ENCODE measurements at regions of chr17 and their contacts with region 1.

Region 1: GRCh38 chr17:78697554-78698343 is 84.3 kb downstream of the CYTH1 start:
- DNase-seq: peak; percentile 61
- H3K4me3 ChIP-seq: no peak overlapping the region
- H3K27ac ChIP-seq: peak overlapping the region; percentile 22
- H3K4me1 ChIP-seq: peaks cover 3% of the 10 kb centered on the region
- H3K27me3 ChIP-seq: no peaks in the 10 kb centered on the region
- CTCF ChIP-seq: no peak

Region 2: GRCh38 chr17:78672880-78673371 is 24.8 kb before region 1 on chr17:
- CTCF ChIA-PET with region 1: no interaction called
- POLR2A ChIA-PET with region 1: interaction called, 13 read pairs
- intact Hi-C with region 1: no loop called
- DNase-seq: no peak
- H3K4me3 ChIP-seq: no peak overlapping the region
- H3K27ac ChIP-seq: no peak overlapping the region
- H3K4me1 ChIP-seq: no peaks in the 10 kb centered on the region
- H3K27me3 ChIP-seq: no peaks in the 10 kb centered on the region
- CTCF ChIP-seq: no peak

Region 3: DNA sequence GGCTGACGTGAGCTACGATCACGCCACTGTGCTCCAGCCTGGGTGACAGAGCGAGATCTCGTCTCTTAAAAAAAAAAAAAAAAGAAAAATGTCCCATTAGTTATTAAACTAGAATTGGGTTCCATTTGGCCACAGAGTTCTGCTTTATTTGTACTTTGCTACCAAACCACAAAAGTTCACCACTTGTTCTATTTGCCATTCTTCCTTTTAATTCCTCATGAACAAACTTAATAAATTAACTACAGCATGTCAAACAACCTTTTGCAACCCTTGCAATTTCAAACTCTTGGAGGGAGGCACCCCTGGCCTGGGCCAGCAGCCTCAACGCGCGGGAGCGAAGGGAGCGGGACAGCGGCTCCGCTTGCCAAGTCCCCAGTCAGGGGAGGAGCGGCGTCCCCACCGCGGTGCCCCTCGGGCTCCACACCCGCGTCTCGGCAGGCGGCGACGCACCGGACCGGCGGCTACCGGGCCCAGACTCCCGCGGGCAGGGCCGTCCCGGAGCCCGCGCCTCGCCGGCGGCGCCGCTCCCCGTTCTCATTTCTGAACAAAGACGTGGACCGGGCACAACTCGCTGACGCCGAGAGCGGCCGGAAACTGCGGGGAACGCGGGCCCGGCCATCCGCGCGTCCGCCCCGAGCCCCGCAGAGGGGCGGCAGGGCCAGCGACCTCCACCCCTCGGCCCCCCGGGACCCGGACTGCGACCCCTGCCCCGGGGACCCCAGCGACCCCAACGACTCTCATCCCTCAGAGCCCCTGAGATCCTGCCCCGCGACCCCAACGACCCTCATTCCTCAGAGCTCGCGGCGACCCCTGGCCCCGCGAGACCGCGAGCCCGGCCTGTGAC is 83.6 kb after region 1 on chr17:
- CTCF ChIA-PET with region 1: no interaction called
- POLR2A ChIA-PET with region 1: no interaction called
- intact Hi-C with region 1: no loop called
- DNase-seq: peak; percentile 63
- H3K4me3 ChIP-seq: peak overlapping the region; percentile 98
- H3K27ac ChIP-seq: peak overlapping the region; percentile 83
- H3K4me1 ChIP-seq: peaks cover 4% of the 10 kb centered on the region
- H3K27me3 ChIP-seq: no peaks in the 10 kb centered on the region
- CTCF ChIP-seq: no peak

Region 4: DNA sequence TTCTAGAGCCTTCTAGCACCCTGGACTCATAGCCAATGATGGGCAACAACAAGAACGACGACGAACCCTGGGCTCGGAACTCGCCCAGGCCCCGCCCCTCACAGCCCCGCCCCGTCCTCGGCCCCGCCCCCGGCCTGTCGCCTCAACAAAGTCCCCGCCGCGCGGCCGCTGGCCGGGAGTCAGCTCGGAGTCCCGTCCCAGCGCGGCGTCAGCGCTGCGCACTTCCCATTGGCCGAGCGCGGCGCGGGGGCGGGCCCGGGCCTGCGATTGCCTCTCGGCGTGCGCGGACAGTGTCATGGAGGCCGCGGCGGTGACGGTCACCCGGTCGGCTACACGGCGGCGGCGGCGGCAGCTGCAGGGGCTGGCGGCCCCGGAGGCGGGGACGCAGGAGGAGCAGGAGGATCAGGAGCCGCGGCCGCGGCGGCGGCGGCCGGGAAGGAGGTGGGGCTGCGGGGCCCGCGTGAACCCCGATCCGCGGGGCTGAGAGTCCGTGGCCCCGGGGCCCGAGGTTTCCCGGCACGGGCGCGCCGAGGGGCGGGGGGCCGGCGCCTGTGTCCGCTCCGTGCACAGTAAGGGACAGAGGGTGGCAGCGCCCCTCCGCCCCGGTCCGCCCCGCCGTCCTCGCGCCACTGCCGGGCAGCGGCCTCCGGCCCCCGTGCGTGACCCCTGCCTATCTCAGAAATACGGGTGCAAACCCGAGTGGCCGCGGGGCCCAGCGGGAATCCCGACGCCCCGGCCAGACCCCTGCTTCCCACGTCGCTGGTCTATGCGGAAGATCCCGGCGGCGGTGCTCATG is 377.1 kb after region 1 on chr17 and contains the start of gene ENGASE:
- CTCF ChIA-PET with region 1: no interaction called
- POLR2A ChIA-PET with region 1: interaction called, 18 read pairs
- intact Hi-C with region 1: no loop called
- DNase-seq: peak; percentile 95
- H3K4me3 ChIP-seq: peak within 1 kb of the TSS; percentile 82
- H3K27ac ChIP-seq: peak within 1 kb of the TSS; percentile 79
- H3K4me1 ChIP-seq: no peaks in the 10 kb centered on the region
- H3K27me3 ChIP-seq: no peaks in the 10 kb centered on the region
- CTCF ChIP-seq: no peak
- total RNA-seq, gene ENGASE: 24.4 and 33.6 TPM in 2 replicates

Measured in A673 (cell line).